ENCODE measurements at regions of chr20 and their contacts with region 1.

Region 1: GRCh38 chr20:44217342-44218092 is 6.9 kb upstream of the OSER1 start:
- DNase-seq: peak; percentile 37 to 87 (median 72)
- ATAC-seq: peak; percentile 61
- H3K4me3 ChIP-seq: peak overlapping the region; percentile 36 to 47
- H3K4me3 Mint-ChIP-seq: peak overlapping the region; percentile 82
- H3K27ac ChIP-seq: peak overlapping the region; percentile 46 to 63
- H3K27ac Mint-ChIP-seq: peak overlapping the region; percentile 96
- H3K4me1 ChIP-seq: peaks cover 48% of the 10 kb centered on the region
- H3K4me1 Mint-ChIP-seq: peaks cover 70% of the 10 kb centered on the region
- H3K27me3 ChIP-seq: no peaks in the 10 kb centered on the region
- H3K27me3 Mint-ChIP-seq: no peaks in the 10 kb centered on the region
- CTCF ChIP-seq: peak; percentile 94

Region 2: GRCh38 chr20:44142413-44142812 is 75.1 kb before region 1 on chr20:
- CTCF ChIA-PET with region 1: no interaction called
- POLR2A ChIA-PET with region 1: no interaction called
- intact Hi-C with region 1: no loop called
- DNase-seq: no peak
- ATAC-seq: no peak
- H3K4me3 ChIP-seq: no peak overlapping the region
- H3K4me3 Mint-ChIP-seq: no peak overlapping the region
- H3K27ac ChIP-seq: no peak overlapping the region
- H3K27ac Mint-ChIP-seq: no peak overlapping the region
- H3K4me1 ChIP-seq: no peaks in the 10 kb centered on the region
- H3K4me1 Mint-ChIP-seq: no peaks in the 10 kb centered on the region
- H3K27me3 ChIP-seq: no peaks in the 10 kb centered on the region
- H3K27me3 Mint-ChIP-seq: peaks cover 28% of the 10 kb centered on the region
- CTCF ChIP-seq: no peak

Region 3: DNA sequence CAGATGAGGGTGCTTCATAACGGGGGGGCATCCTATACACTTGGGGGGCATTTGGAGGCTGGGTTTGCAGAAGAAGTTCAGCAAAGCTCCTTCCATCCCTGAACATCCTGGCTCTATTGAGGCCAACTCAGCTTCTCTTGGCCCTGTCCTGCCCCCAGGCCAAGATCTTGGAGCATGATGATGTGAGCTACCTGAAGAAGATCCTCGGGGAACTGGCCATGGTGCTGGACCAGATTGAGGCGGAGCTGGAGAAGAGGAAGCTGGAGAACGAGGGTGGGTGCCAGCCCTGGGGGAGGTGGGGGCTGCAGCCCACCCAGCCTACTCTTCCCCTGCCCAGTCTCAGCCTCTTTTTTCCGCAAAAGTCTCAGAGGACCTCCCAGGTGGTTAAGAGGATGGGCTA is 46.8 kb after region 1 on chr20:
- CTCF ChIA-PET with region 1: interaction called, 16 read pairs
- POLR2A ChIA-PET with region 1: no interaction called
- intact Hi-C with region 1: no loop called
- DNase-seq: no peak
- ATAC-seq: no peak
- H3K4me3 ChIP-seq: no peak overlapping the region
- H3K4me3 Mint-ChIP-seq: no peak overlapping the region
- H3K27ac ChIP-seq: no peak overlapping the region
- H3K27ac Mint-ChIP-seq: no peak overlapping the region
- H3K4me1 ChIP-seq: no peaks in the 10 kb centered on the region
- H3K4me1 Mint-ChIP-seq: no peaks in the 10 kb centered on the region
- H3K27me3 ChIP-seq: no peaks in the 10 kb centered on the region
- H3K27me3 Mint-ChIP-seq: no peaks in the 10 kb centered on the region
- CTCF ChIP-seq: no peak

Region 4: DNA sequence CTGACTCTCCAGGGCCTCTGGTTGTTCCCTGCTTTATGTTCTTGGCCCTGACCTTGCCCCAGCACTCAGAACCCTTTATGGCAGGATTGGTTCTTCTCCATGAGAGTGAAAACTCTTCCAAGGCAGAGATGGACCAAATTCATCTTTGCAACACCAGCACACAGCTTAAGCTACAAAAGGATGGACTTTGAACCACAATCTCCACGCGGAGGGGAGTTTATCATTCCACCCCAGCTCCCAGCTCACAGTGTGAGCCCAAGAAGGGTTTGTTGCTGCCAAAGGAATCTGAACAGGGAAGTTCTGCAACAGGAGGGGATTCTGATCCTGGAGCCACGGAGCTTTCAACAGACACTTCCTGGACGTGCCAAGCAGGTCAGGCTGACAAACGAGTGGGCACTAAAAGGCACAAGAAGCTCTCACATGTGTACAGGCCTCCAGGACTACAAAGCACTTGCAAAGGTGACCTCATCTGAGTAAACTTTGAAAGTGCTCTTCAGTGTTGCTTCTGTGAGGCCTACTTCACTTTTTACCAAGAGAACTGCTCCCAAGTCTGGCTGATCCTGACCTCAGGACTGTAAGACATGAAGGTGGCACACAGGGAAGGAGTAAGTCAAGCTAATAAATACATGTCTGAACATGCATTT is 84.6 kb after region 1 on chr20:
- CTCF ChIA-PET with region 1: interaction called, 596 read pairs
- POLR2A ChIA-PET with region 1: interaction called, 3 read pairs
- intact Hi-C with region 1: no loop called
- DNase-seq: no peak
- ATAC-seq: no peak
- H3K4me3 ChIP-seq: no peak overlapping the region
- H3K4me3 Mint-ChIP-seq: no peak overlapping the region
- H3K27ac ChIP-seq: no peak overlapping the region
- H3K27ac Mint-ChIP-seq: no peak overlapping the region
- H3K4me1 ChIP-seq: no peaks in the 10 kb centered on the region
- H3K4me1 Mint-ChIP-seq: peaks cover 31% of the 10 kb centered on the region
- H3K27me3 ChIP-seq: no peaks in the 10 kb centered on the region
- H3K27me3 Mint-ChIP-seq: no peaks in the 10 kb centered on the region
- CTCF ChIP-seq: no peak

Region 5: GRCh38 chr20:44388466-44389023 is 171.0 kb after region 1 on chr20:
- CTCF ChIA-PET with region 1: interaction called, 116 read pairs
- POLR2A ChIA-PET with region 1: interaction called, 3 read pairs
- intact Hi-C with region 1: loop called (anchors 1 kb)
- DNase-seq: peak; percentile 13 to 77 (median 63)
- ATAC-seq: peak; percentile 88
- H3K4me3 ChIP-seq: no peak overlapping the region
- H3K4me3 Mint-ChIP-seq: no peak overlapping the region
- H3K27ac ChIP-seq: no peak overlapping the region
- H3K27ac Mint-ChIP-seq: no peak overlapping the region
- H3K4me1 ChIP-seq: no peaks in the 10 kb centered on the region
- H3K4me1 Mint-ChIP-seq: peaks cover 10% of the 10 kb centered on the region
- H3K27me3 ChIP-seq: no peaks in the 10 kb centered on the region
- H3K27me3 Mint-ChIP-seq: peaks cover 14% of the 10 kb centered on the region
- CTCF ChIP-seq: peak; percentile 68

Region 6: DNA sequence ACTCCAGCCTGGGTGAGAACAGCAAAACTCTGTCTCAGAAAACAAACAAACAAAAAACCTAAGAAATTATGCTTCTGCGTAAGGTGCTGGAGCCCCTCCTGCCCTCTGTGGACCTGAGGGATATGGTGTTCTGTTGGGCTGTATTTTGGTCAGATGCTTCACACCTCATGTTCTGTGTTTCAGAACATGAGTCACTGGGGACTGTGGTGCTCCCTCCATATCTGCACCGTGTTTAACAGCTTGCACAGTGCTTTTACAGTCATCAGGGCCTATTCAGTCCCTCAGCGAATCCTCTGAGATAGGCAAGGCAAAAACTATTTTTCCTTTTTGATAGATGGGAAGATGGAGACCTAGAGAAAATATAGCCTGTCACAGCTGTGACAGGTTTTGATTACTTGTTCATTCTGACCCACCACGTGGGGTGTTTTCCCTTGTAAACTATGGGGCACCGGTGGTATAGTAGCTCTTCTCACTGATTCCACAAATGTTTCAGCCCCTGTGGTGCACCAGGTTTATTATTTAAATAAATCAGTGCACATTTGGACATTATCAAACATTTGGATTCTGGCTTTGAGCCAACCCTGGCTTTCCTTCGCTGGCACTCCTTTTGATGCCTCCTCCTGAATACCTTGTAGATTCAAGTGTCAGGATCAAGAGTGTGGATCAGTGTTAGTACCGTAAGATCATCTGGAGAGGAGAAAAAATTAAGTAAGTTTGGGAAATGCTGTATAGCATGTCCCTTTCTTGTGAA is 267.7 kb after region 1 on chr20:
- CTCF ChIA-PET with region 1: no interaction called
- POLR2A ChIA-PET with region 1: no interaction called
- intact Hi-C with region 1: loop called in 1 of 2 experiments (anchors 1 kb)
- DNase-seq: no peak
- ATAC-seq: no peak
- H3K4me3 ChIP-seq: no peak overlapping the region
- H3K4me3 Mint-ChIP-seq: no peak overlapping the region
- H3K27ac ChIP-seq: no peak overlapping the region
- H3K27ac Mint-ChIP-seq: peak overlapping the region; percentile 78
- H3K4me1 ChIP-seq: no peaks in the 10 kb centered on the region
- H3K4me1 Mint-ChIP-seq: peaks cover 4% of the 10 kb centered on the region
- H3K27me3 ChIP-seq: no peaks in the 10 kb centered on the region
- H3K27me3 Mint-ChIP-seq: no peaks in the 10 kb centered on the region
- CTCF ChIP-seq: no peak

Region 7: DNA sequence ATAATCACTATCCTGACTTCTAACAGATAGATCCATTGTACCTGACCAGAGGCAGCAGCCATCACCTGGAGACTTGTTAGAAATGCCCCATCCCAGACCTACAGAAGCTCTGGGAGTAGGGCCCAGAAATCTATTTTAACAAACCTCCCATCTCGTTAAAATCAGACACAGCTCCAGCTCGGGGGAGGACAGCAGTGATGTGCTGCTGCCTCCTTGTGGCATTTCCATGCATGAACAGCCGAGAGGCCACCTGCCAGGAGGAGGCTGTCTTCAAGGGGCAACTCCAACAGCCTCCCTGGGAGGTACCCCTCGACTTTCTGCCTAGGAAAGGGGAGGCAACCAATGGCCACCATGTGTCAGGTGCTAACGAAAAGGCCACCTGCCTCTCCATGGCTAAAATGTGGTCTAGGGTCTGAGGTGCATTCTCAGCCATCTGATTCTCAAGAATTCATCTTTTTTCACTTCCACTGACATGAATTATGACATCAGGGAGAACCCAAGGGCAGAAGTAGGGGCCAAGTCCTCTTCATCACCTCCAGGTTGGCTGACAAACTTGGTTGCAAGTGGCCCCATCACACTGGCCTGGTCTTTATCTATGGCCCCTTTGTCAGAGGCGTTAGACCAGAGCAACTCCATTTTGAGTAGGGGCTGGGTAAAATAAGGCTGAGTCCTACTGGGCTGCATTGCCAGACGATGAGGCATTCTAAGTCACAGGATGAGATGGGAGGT is 516.0 kb after region 1 on chr20:
- CTCF ChIA-PET with region 1: interaction called, 9 read pairs
- POLR2A ChIA-PET with region 1: no interaction called
- intact Hi-C with region 1: loop called (anchors 1 to 2 kb)
- DNase-seq: peak; percentile 29 to 78 (median 56)
- ATAC-seq: peak; percentile 85
- H3K4me3 ChIP-seq: no peak overlapping the region
- H3K4me3 Mint-ChIP-seq: no peak overlapping the region
- H3K27ac ChIP-seq: no peak overlapping the region
- H3K27ac Mint-ChIP-seq: no peak overlapping the region
- H3K4me1 ChIP-seq: peaks cover 7% of the 10 kb centered on the region
- H3K4me1 Mint-ChIP-seq: peaks cover 14% of the 10 kb centered on the region
- H3K27me3 ChIP-seq: no peaks in the 10 kb centered on the region
- H3K27me3 Mint-ChIP-seq: no peaks in the 10 kb centered on the region
- CTCF ChIP-seq: peak; percentile 71

Measured in CD8-positive, alpha-beta T cell (primary cell).